CD8-positive, alpha-beta T cell (primary cell): ENCODE measurements at regions of chr9 and their contacts with region 1.

Region 1: DNA sequence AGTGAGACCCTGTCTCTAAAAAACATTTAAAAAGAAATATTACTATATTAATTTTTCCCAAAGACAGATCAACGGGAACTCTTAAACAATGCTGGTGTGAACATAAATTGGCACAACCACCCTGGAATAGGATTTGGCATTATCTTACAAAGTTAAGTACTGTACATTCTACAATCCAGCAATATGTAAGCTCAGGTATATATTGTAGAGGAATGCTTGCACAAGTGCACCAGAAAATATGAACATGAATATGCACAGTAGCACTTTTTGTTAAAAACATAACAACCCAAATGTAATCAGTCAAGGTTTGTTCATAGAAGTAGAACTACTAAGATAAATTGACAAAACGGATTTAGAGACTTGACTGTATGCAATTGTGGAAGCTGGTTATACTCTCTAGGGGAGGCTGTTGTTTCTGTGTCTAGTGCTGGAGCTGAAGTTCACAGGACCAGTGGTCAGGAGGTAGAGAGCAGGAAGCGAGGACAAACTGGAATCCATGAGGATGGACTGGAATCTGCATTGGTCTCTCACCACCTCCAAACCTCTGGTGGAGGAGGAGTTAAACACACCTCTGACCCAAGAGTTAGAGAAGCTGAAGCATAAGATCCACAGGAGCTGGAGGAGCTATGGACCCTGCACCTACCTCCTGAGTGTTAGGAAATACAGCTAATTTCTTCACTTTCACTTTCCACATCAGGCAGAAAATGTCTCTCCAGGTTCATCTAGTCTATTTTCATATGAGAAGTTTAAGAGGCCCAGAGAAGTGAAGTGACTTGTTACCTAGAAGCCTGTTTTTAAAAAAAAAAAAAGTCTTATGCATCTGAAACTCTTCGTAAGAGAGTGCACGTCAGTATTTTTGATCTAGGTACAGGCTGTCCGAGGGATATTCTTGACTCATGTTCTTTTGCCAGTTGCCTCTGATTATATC is 20.3 kb upstream of the RIC1 start:
- DNase-seq: peak in 1 of 9 experiments; percentile 25
- ATAC-seq: peak; percentile 63
- H3K4me3 ChIP-seq: peak overlapping the region; percentile 17 to 20
- H3K4me3 Mint-ChIP-seq: peak overlapping the region; percentile 82
- H3K27ac ChIP-seq: no peak overlapping the region
- H3K27ac Mint-ChIP-seq: peak overlapping the region; percentile 83
- H3K4me1 ChIP-seq: peaks cover 6% of the 10 kb centered on the region
- H3K4me1 Mint-ChIP-seq: peaks cover 36% of the 10 kb centered on the region
- H3K27me3 ChIP-seq: no peaks in the 10 kb centered on the region
- H3K27me3 Mint-ChIP-seq: no peaks in the 10 kb centered on the region
- CTCF ChIP-seq: no peak

Region 2: DNA sequence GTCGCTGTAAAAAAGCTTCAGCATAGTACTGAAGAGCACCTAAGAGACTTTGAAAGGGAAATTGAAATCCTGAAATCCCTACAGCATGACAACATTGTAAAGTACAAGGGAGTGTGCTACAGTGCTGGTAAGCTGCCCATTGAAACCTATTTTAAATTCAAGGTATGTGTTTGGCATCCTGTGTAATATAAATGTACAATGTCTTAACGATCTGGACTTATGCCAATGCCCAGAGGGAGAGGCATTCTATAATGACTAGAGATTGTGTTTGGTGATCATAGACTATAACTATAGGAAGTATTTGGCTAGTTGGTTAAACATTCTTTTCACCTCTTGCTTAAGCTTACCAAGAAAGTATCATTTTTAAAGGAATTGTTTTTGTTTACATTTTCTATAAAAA is 518.8 kb before region 1 on chr9:
- CTCF ChIA-PET with region 1: no interaction called
- POLR2A ChIA-PET with region 1: no interaction called
- intact Hi-C with region 1: loop called in 1 of 2 experiments (anchors 10 kb)
- DNase-seq: no peak
- ATAC-seq: no peak
- H3K4me3 ChIP-seq: no peak overlapping the region
- H3K4me3 Mint-ChIP-seq: no peak overlapping the region
- H3K27ac ChIP-seq: no peak overlapping the region
- H3K27ac Mint-ChIP-seq: no peak overlapping the region
- H3K4me1 ChIP-seq: no peaks in the 10 kb centered on the region
- H3K4me1 Mint-ChIP-seq: no peaks in the 10 kb centered on the region
- H3K27me3 ChIP-seq: no peaks in the 10 kb centered on the region
- H3K27me3 Mint-ChIP-seq: no peaks in the 10 kb centered on the region
- CTCF ChIP-seq: no peak

Region 3: DNA sequence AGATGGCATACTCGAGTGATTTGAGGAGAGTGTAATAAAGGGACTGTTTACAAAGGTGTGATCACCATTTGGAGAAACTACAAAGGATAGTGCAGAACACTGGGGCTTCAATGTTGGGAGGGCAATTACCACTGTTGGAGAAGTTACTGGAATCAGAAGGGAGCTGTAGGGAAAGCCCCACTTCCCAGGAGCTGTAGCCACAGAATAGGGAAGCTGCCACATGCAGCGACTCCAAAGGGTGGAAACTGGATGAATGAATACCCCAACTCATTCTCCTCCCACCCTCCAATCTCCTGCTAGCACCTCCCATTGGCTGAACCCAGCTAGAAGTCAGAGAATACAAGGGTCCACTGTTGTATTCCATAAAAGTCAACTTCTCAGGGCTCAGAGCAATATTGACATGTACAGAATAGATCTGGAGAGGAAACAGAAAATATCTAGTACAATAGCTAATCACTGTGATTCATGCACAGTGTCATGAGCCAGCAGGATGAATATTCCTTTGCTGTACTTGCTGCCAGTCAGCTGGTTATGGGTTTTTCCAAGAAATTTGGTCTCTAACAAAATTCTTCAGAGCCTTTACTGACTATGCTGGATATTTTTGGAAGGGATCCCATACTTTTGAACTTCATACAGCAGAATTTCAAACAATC is 58.8 kb before region 1 on chr9:
- CTCF ChIA-PET with region 1: no interaction called
- POLR2A ChIA-PET with region 1: no interaction called
- intact Hi-C with region 1: no loop called
- DNase-seq: no peak
- ATAC-seq: no peak
- H3K4me3 ChIP-seq: no peak overlapping the region
- H3K4me3 Mint-ChIP-seq: no peak overlapping the region
- H3K27ac ChIP-seq: no peak overlapping the region
- H3K27ac Mint-ChIP-seq: no peak overlapping the region
- H3K4me1 ChIP-seq: no peaks in the 10 kb centered on the region
- H3K4me1 Mint-ChIP-seq: peaks cover 2% of the 10 kb centered on the region
- H3K27me3 ChIP-seq: no peaks in the 10 kb centered on the region
- H3K27me3 Mint-ChIP-seq: no peaks in the 10 kb centered on the region
- CTCF ChIP-seq: no peak

Region 4: DNA sequence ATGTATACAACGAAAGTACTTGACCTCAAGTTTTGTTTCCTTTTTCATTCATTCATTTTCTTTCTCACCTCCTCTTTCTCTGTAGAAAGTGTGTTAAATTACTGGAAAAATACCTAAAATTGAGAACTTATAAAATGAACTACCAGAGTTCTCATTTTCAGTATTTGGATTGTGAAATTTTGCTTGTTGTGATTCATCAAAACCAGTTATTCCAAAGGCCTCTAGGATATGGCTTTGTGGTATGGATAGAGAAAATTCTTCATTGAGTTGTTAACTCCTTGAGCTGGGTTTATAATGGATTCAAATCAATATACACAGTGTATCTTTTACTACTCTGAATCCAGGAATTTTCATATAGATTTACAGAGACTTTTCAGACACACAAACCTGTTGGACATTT is 1436.8 kb after region 1 on chr9:
- CTCF ChIA-PET with region 1: no interaction called
- POLR2A ChIA-PET with region 1: no interaction called
- intact Hi-C with region 1: no loop called
- DNase-seq: no peak
- ATAC-seq: no peak
- H3K4me3 ChIP-seq: no peak overlapping the region
- H3K4me3 Mint-ChIP-seq: no peak overlapping the region
- H3K27ac ChIP-seq: no peak overlapping the region
- H3K27ac Mint-ChIP-seq: no peak overlapping the region
- H3K4me1 ChIP-seq: no peaks in the 10 kb centered on the region
- H3K4me1 Mint-ChIP-seq: no peaks in the 10 kb centered on the region
- H3K27me3 ChIP-seq: no peaks in the 10 kb centered on the region
- H3K27me3 Mint-ChIP-seq: no peaks in the 10 kb centered on the region
- CTCF ChIP-seq: no peak